ENCODE measurements at regions of chr12 and their contacts with region 1.

Region 1: GRCh38 chr12:71551529-71551928 is 111.9 kb downstream of the LGR5 start:
- DNase-seq: no peak
- H3K4me3 Mint-ChIP-seq: no peak overlapping the region
- H3K27ac Mint-ChIP-seq: no peak overlapping the region
- H3K4me1 Mint-ChIP-seq: peaks cover 7% of the 10 kb centered on the region
- H3K27me3 Mint-ChIP-seq: no peaks in the 10 kb centered on the region
- CTCF ChIP-seq: no peak

Region 2: DNA sequence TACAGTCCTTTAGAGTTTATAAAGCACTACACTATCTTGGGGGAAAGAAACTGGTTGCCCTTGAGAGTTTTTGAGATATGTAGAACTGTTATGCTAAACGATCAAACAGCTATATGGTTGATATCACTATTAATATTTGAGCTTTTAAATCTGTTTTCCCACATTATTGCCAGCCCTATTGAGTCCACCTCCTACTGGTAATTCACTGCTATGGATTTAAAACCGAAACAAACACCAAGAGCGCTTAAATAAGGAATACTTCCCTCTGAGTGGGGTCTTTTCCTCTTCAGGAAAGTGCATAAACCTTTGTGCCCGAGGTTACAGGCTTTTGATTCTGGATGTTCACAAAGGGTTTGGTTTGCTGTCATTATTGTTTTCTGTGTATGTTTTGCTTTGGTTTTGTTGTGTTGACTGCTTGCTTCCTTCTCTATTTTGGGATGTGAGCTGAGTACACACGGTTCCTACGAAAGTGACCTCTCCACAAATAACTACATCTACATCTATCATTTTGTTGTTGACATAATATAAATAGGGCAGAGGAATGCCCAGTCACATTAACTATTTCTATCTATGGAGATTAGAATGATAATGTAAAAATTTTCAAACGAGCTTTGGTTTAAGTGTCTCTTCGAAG is 67.1 kb before region 1 on chr12:
- CTCF ChIA-PET with region 1: no interaction called
- intact Hi-C with region 1: loop called (anchors 5 kb)
- DNase-seq: no peak
- H3K4me3 Mint-ChIP-seq: no peak overlapping the region
- H3K27ac Mint-ChIP-seq: no peak overlapping the region
- H3K4me1 Mint-ChIP-seq: no peaks in the 10 kb centered on the region
- H3K27me3 Mint-ChIP-seq: peaks cover 38% of the 10 kb centered on the region
- CTCF ChIP-seq: no peak